ENCODE measurements at regions of chr5 and their contacts with region 1.

Region 1: GRCh38 chr5:102547141-102548035 is 48.6 kb upstream of the SLCO6A1 start:
- DNase-seq: no peak
- H3K4me3 ChIP-seq: no peak overlapping the region
- CTCF ChIP-seq: no peak

Region 2: DNA sequence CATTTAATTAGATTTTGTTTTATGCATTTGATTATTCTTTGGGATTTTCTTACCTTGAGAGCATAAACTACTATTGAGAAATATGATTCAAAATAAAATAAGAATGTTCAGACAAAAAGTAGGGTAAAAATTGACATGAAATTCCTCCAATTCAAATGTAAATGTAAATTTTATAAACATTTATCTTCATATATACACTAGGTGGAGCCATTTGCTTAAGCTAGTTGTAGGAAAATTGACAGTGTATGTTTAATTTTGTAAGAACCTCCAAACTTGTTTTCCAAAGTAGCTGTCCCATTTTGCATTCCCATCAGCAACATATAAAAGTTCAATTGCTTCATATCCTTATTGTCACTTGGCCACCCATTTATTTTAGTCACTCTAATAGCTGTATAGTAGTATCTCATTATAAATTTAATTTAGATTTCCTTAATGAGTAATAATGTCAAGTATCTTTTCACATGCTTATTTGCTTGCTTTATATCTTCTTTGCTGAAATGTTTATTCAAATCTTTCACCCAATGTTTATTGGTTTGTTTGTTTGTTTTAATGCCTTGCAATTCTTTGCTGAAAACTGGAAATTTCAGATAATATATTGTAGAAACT is 11.0 kb before region 1 on chr5:
- CTCF ChIA-PET with region 1: interaction called, 16 read pairs
- POLR2A ChIA-PET with region 1: no interaction called
- DNase-seq: no peak
- H3K4me3 ChIP-seq: no peak overlapping the region
- CTCF ChIP-seq: peak; percentile 7

Region 3: GRCh38 chr5:102561894-102562760 is 14.7 kb after region 1 on chr5:
- CTCF ChIA-PET with region 1: no interaction called
- POLR2A ChIA-PET with region 1: no interaction called
- DNase-seq: no peak
- H3K4me3 ChIP-seq: no peak overlapping the region
- CTCF ChIP-seq: peak; percentile 38

Region 4: DNA sequence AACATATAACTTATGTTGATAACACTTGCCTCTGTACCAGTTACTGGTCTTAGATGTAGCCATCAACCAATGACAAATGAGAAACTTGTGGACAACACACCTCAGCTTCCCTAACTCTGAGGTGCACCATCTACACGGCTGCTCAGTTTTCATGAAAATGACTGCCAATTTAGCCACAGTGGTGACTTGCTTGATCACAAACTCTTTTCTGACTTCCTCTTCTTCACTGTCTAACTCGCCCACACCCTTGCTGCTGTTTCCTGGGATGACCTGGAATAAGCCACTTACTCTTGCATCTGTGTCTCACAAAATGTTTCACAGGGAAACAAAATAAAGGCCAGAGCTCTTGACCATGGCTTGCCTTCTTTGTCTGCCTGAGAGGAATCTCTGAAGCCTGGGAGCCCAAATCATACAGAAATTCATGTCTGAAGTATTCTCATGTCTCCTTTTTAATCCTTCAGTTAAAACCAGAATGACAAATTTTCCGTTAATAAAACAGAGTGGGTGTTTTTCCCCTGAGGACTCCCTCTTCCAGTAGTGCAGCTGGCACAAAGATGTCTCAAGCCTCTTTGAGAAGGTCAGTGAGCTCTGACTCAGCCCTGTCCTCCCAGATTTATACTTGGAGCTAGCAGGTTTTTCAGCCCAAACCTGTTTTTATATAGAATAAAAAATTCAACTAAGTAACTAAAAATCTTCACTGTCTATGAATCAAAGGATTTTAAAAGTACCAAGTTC is 81.2 kb after region 1 on chr5:
- CTCF ChIA-PET with region 1: no interaction called
- POLR2A ChIA-PET with region 1: no interaction called
- DNase-seq: no peak
- H3K4me3 ChIP-seq: no peak overlapping the region
- CTCF ChIP-seq: no peak